ENCODE measurements at regions of chr12 and their contacts with region 1.

Region 1: GRCh38 chr12:16857456-16857923 is 251.5 kb upstream of the LMO3 start:
- DNase-seq: peak; percentile 64
- ATAC-seq: peak; percentile 95
- H3K4me3 ChIP-seq: no peak overlapping the region
- H3K27ac ChIP-seq: no peak overlapping the region
- H3K4me1 ChIP-seq: peaks cover 3% of the 10 kb centered on the region; the same call in 1 of the 2 replicates
- H3K27me3 ChIP-seq: no peaks in the 10 kb centered on the region
- CTCF ChIP-seq: no peak
- EP300 ChIP-seq: peak; percentile 86 to 90
- POLR2A ChIP-seq: no peak
- RAD21 ChIP-seq: no peak

Region 2: GRCh38 chr12:16658699-16659098 is 198.8 kb before region 1 on chr12:
- CTCF ChIA-PET with region 1: no interaction called
- POLR2A ChIA-PET with region 1: no interaction called
- RAD21 ChIA-PET with region 1: no interaction called
- SMC1A ChIA-PET with region 1: no interaction called
- in situ Hi-C with region 1: no loop called
- intact Hi-C with region 1: no loop called
- DNase-seq: no peak
- ATAC-seq: no peak
- H3K4me3 ChIP-seq: no peak overlapping the region
- H3K27ac ChIP-seq: no peak overlapping the region
- H3K4me1 ChIP-seq: no peaks in the 10 kb centered on the region
- H3K27me3 ChIP-seq: no peaks in the 10 kb centered on the region
- CTCF ChIP-seq: no peak
- EP300 ChIP-seq: no peak
- POLR2A ChIP-seq: no peak
- RAD21 ChIP-seq: no peak

Region 3: DNA sequence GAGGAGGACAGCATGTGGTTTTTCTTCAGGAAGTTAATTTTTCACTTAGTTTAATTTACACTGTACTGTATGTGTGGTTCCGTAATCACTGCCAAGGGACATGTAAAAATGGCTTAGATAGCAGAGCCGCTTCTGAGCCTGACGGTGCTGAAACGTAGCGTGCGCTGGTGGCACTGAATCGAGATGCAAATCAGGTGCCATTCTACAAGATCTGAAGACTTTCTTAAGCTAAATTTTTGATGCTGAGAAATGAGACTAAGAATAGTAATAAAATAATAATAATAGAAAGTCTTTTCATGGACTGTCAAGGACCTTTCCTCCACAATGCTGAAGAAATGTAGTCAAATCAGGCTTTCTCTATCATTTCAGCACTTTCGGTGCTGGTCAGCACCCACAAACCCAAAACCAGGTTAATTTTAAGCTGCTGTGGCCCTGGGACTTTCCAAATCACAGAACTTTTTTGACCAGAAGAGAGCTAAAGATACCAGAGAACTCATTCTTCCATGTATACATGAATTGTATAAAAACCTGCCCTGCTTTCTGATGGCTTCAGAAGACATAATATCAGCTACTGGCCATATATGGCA is 68.2 kb before region 1 on chr12:
- CTCF ChIA-PET with region 1: no interaction called
- POLR2A ChIA-PET with region 1: interaction called, 3 read pairs
- RAD21 ChIA-PET with region 1: interaction called, 11 read pairs
- SMC1A ChIA-PET with region 1: interaction called, 21 read pairs
- in situ Hi-C with region 1: no loop called
- intact Hi-C with region 1: no loop called
- DNase-seq: peak; percentile 37
- ATAC-seq: peak; percentile 84
- H3K4me3 ChIP-seq: no peak overlapping the region
- H3K27ac ChIP-seq: no peak overlapping the region
- H3K4me1 ChIP-seq: no peaks in the 10 kb centered on the region
- H3K27me3 ChIP-seq: no peaks in the 10 kb centered on the region
- CTCF ChIP-seq: no peak
- EP300 ChIP-seq: peak; percentile 37 to 58; a peak in 2 of 4 replicates
- POLR2A ChIP-seq: no peak
- RAD21 ChIP-seq: no peak

Region 4: GRCh38 chr12:16833376-16834015 is 24.0 kb before region 1 on chr12:
- CTCF ChIA-PET with region 1: interaction called, 13 read pairs
- POLR2A ChIA-PET with region 1: interaction called, 77 read pairs
- RAD21 ChIA-PET with region 1: interaction called, 133 read pairs
- SMC1A ChIA-PET with region 1: interaction called, 165 read pairs
- in situ Hi-C with region 1: no loop called
- intact Hi-C with region 1: loop called (anchors 2 kb)
- DNase-seq: peak; percentile 33
- ATAC-seq: peak; percentile 82
- H3K4me3 ChIP-seq: no peak overlapping the region
- H3K27ac ChIP-seq: no peak overlapping the region
- H3K4me1 ChIP-seq: no peaks in the 10 kb centered on the region
- H3K27me3 ChIP-seq: no peaks in the 10 kb centered on the region
- CTCF ChIP-seq: no peak
- EP300 ChIP-seq: peak; percentile 18 to 48; a peak in 2 of 4 replicates
- POLR2A ChIP-seq: no peak
- RAD21 ChIP-seq: no peak

Region 5: DNA sequence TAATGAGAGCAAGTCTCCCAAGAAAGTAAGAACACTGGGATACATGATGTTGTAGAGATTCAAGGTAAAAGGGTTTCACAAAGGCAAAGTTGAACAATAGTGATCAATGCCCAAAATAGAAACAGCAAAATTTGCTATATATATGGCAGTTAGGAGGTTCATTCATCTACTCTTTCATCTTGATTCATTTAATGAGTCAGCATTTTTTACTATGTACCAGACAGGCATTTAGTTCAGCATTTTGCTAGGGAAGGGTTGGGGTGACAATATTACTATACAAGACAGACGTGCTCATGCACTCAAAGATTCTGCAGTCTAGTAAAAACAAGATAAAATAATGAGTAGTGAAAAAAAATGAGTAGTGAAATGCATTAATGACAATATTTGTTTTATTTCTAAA is 13.4 kb after region 1 on chr12:
- CTCF ChIA-PET with region 1: interaction called, 6 read pairs
- POLR2A ChIA-PET with region 1: no interaction called
- RAD21 ChIA-PET with region 1: interaction called, 4 read pairs
- SMC1A ChIA-PET with region 1: interaction called, 61 read pairs
- in situ Hi-C with region 1: no loop called
- intact Hi-C with region 1: no loop called
- DNase-seq: no peak
- ATAC-seq: no peak
- H3K4me3 ChIP-seq: no peak overlapping the region
- H3K27ac ChIP-seq: no peak overlapping the region
- H3K4me1 ChIP-seq: no peaks in the 10 kb centered on the region
- H3K27me3 ChIP-seq: no peaks in the 10 kb centered on the region
- CTCF ChIP-seq: no peak
- EP300 ChIP-seq: no peak
- POLR2A ChIP-seq: no peak
- RAD21 ChIP-seq: no peak

Region 6: GRCh38 chr12:16880864-16881285 is 23.4 kb after region 1 on chr12:
- CTCF ChIA-PET with region 1: interaction called, 5 read pairs
- POLR2A ChIA-PET with region 1: interaction called, 6 read pairs
- RAD21 ChIA-PET with region 1: interaction called, 19 read pairs
- SMC1A ChIA-PET with region 1: interaction called, 61 read pairs
- in situ Hi-C with region 1: no loop called
- intact Hi-C with region 1: no loop called
- DNase-seq: no peak
- ATAC-seq: no peak
- H3K4me3 ChIP-seq: no peak overlapping the region
- H3K27ac ChIP-seq: no peak overlapping the region
- H3K4me1 ChIP-seq: no peaks in the 10 kb centered on the region
- H3K27me3 ChIP-seq: no peaks in the 10 kb centered on the region
- CTCF ChIP-seq: no peak
- EP300 ChIP-seq: no peak
- POLR2A ChIP-seq: no peak
- RAD21 ChIP-seq: no peak